H1 (cell line): ENCODE measurements at regions of chr11 and their contacts with region 1.

Region 1: GRCh38 chr11:122863704-122864326 is 18.7 kb upstream of the JHY start:
- DNase-seq: no peak
- H3K4me3 ChIP-seq: no peak overlapping the region
- H3K27ac ChIP-seq: no peak overlapping the region
- H3K4me1 ChIP-seq: no peaks in the 10 kb centered on the region
- H3K27me3 ChIP-seq: no peaks in the 10 kb centered on the region
- CTCF ChIP-seq: peak in 2 of 3 experiments; percentile 61 to 73; a peak in 3 of 4 replicates
- EP300 ChIP-seq: no peak
- POLR2A ChIP-seq: no peak
- RAD21 ChIP-seq: peak; percentile 80 to 82

Region 2: GRCh38 chr11:122874991-122875390 is 11.2 kb after region 1 on chr11:
- CTCF ChIA-PET with region 1: interaction called, 32 read pairs
- POLR2A ChIA-PET with region 1: no interaction called
- DNase-seq: no peak
- H3K4me3 ChIP-seq: no peak overlapping the region
- H3K27ac ChIP-seq: no peak overlapping the region
- H3K4me1 ChIP-seq: peaks cover 0 to 8% (median 1%) of the 10 kb centered on the region in 4 experiments; a peak in 4 of 7 replicates
- H3K27me3 ChIP-seq: no peaks in the 10 kb centered on the region
- CTCF ChIP-seq: no peak
- EP300 ChIP-seq: no peak
- POLR2A ChIP-seq: no peak
- RAD21 ChIP-seq: no peak

Region 3: DNA sequence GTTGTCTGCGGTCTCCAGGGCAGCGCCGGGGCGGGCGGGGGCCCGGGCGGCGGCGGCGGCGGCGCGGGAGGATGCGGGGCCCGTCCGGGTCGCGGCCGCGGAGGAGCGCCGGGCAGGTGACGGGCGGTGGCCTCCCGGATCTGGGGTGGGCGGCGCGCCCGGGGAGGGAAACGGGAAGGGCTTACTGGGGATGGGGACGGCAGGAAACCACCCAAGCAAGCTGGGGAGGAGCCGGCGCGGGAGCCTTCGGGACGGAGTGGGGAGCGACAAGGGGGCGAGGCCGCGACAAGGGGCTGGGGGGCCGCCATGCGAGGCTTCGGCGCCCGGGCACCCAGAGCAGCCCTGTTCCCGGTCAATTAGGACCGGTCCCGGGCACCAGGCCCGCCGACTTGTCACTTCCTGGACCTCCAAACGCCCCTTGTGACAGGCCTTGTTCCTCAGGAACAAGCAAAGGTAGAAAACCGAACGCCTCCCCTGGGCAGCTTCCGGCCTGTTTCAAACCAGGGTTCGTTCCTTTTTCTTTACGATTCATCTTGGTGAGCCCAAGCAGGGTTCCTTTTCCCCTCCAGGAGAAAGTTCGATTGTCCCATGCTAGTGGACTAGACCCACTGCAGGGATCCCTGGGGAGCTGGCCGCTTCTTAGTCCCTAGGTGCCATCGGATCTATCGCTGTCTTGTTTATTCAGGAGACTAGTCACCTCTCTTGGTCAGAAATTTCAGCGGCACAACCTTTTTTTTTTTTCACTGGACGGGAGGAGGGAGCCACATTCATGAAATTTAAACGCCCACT is 19.2 kb after region 1 on chr11:
- CTCF ChIA-PET with region 1: interaction called, 32 read pairs
- POLR2A ChIA-PET with region 1: interaction called, 3 read pairs
- DNase-seq: peak in 1 of 2 experiments; percentile 78
- H3K4me3 ChIP-seq: peak overlapping the region; percentile 66 to 81 (median 68)
- H3K27ac ChIP-seq: no peak overlapping the region
- H3K4me1 ChIP-seq: peaks cover 0 to 11% (median 5%) of the 10 kb centered on the region in 4 experiments; a peak in 5 of 7 replicates
- H3K27me3 ChIP-seq: peaks cover 0 to 13% (median 10%) of the 10 kb centered on the region in 4 experiments; a peak in 5 of 7 replicates
- CTCF ChIP-seq: no peak
- EP300 ChIP-seq: no peak
- POLR2A ChIP-seq: peak in 1 of 2 experiments; percentile 28; a peak in 1 of 3 replicates
- RAD21 ChIP-seq: no peak

Region 4: DNA sequence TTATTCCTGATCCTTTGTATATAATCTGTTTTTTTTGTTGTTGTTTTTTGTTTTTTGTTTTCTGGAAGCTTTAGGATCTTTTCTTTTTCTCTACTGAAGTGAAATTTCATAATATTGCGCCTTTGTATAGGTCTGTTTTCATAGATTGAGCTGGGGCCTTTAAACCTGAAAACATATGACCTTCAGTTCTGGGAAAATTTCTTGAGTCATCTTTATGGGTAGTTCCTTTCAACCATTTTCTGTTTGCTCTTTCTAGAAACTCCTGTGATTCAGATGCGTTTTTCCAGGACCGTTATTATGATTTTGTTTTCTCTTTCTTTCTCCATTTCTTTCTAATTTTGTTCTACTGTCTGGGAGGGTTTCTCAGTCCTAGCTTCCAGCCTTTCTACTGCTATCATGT is 74.2 kb after region 1 on chr11:
- CTCF ChIA-PET with region 1: no interaction called
- POLR2A ChIA-PET with region 1: no interaction called
- DNase-seq: no peak
- H3K4me3 ChIP-seq: no peak overlapping the region
- H3K27ac ChIP-seq: no peak overlapping the region
- H3K4me1 ChIP-seq: no peaks in the 10 kb centered on the region
- H3K27me3 ChIP-seq: no peaks in the 10 kb centered on the region
- CTCF ChIP-seq: no peak
- EP300 ChIP-seq: no peak
- POLR2A ChIP-seq: no peak
- RAD21 ChIP-seq: no peak

Region 5: GRCh38 chr11:123046473-123047259 is 182.9 kb after region 1 on chr11:
- CTCF ChIA-PET with region 1: interaction called, 17 read pairs
- POLR2A ChIA-PET with region 1: no interaction called
- DNase-seq: no peak
- H3K4me3 ChIP-seq: no peak overlapping the region
- H3K27ac ChIP-seq: no peak overlapping the region
- H3K4me1 ChIP-seq: no peaks in the 10 kb centered on the region
- H3K27me3 ChIP-seq: no peaks in the 10 kb centered on the region
- CTCF ChIP-seq: no peak
- EP300 ChIP-seq: no peak
- POLR2A ChIP-seq: no peak
- RAD21 ChIP-seq: no peak